Heart left ventricle (tissue), 16 donors: ENCODE measurements at regions of chr2 and their contacts with region 1.

Region 1: GRCh38 chr2:54704688-54705605 is 18.5 kb upstream of the EML6 start:
- DNase-seq: no peak
- ATAC-seq: peak in 2 of 4 donors; percentile 59 to 63
- H3K4me3 ChIP-seq: no peak overlapping the region
- H3K27ac ChIP-seq: peak overlapping the region in 2 of 12 donors; percentile 11 to 30
- H3K4me1 ChIP-seq: peaks cover 0 to 13% (median 0%) of the 10 kb centered on the region in 12 donors
- H3K27me3 ChIP-seq: peaks cover 0 to 15% (median 0%) of the 10 kb centered on the region in 9 donors
- CTCF ChIP-seq: peak; percentile 45 to 85 (median 64)
- POLR2A ChIP-seq: no peak

Region 2: GRCh38 chr2:54106631-54107454 is 598.1 kb before region 1 on chr2:
- intact Hi-C with region 1: loop called in 9 of 10 experiments (anchors 1 to 10 kb)
- DNase-seq: no peak
- ATAC-seq: peak in 3 of 4 donors; percentile 59 to 80 (median 75)
- H3K4me3 ChIP-seq: no peak overlapping the region
- H3K27ac ChIP-seq: no peak overlapping the region
- H3K4me1 ChIP-seq: peaks cover 0 to 8% (median 5%) of the 10 kb centered on the region in 12 donors
- H3K27me3 ChIP-seq: no peaks in the 10 kb centered on the region
- CTCF ChIP-seq: peak; percentile 43 to 78 (median 62)
- POLR2A ChIP-seq: no peak

Region 3: GRCh38 chr2:54176577-54176976 is 528.4 kb before region 1 on chr2:
- intact Hi-C with region 1: loop called (anchors 2 to 10 kb)
- DNase-seq: peak; percentile 48 to 65 (median 50)
- ATAC-seq: peak in 3 of 4 donors; percentile 80 to 87 (median 84)
- H3K4me3 ChIP-seq: no peak overlapping the region
- H3K27ac ChIP-seq: no peak overlapping the region
- H3K4me1 ChIP-seq: no peaks in the 10 kb centered on the region
- H3K27me3 ChIP-seq: no peaks in the 10 kb centered on the region
- CTCF ChIP-seq: peak; percentile 17 to 67 (median 50)
- POLR2A ChIP-seq: no peak

Region 4: GRCh38 chr2:54330162-54330925 is 374.6 kb before region 1 on chr2:
- intact Hi-C with region 1: loop called in 1 of 10 experiments (anchors 10 kb)
- DNase-seq: peak; percentile 97 to 99 (median 98)
- ATAC-seq: peak; percentile 97 to 99 (median 98)
- H3K4me3 ChIP-seq: peak overlapping the region; percentile 34 to 70 (median 59)
- H3K27ac ChIP-seq: peak overlapping the region; percentile 87 to 96 (median 92)
- H3K4me1 ChIP-seq: peaks cover 3 to 29% (median 13%) of the 10 kb centered on the region in 12 donors
- H3K27me3 ChIP-seq: no peaks in the 10 kb centered on the region
- CTCF ChIP-seq: no peak
- POLR2A ChIP-seq: peak; percentile 78 to 93

Region 5: GRCh38 chr2:54522624-54523281 is 182.2 kb before region 1 on chr2:
- intact Hi-C with region 1: loop called in 6 of 10 experiments (anchors 2 to 10 kb)
- DNase-seq: peak in 2 of 5 donors; percentile 45
- ATAC-seq: peak in 2 of 4 donors; percentile 37 to 47
- H3K4me3 ChIP-seq: no peak overlapping the region
- H3K27ac ChIP-seq: peak overlapping the region in 5 of 12 donors; percentile 6 to 82 (median 59)
- H3K4me1 ChIP-seq: peaks cover 8 to 94% (median 87%) of the 10 kb centered on the region in 12 donors
- H3K27me3 ChIP-seq: no peaks in the 10 kb centered on the region
- CTCF ChIP-seq: peak; percentile 42 to 68 (median 59)
- POLR2A ChIP-seq: no peak

Region 6: GRCh38 chr2:54657664-54658083 is 47.3 kb before region 1 on chr2:
- intact Hi-C with region 1: loop called in 4 of 10 experiments (anchors 2 to 5 kb)
- DNase-seq: peak in 2 of 5 donors; percentile 67 to 68
- ATAC-seq: peak; percentile 64 to 78 (median 68)
- H3K4me3 ChIP-seq: no peak overlapping the region
- H3K27ac ChIP-seq: peak overlapping the region in 10 of 12 donors; percentile 1 to 78 (median 56)
- H3K4me1 ChIP-seq: peaks cover 0 to 29% (median 23%) of the 10 kb centered on the region in 12 donors
- H3K27me3 ChIP-seq: no peaks in the 10 kb centered on the region
- CTCF ChIP-seq: peak; percentile 37 to 69 (median 56)
- POLR2A ChIP-seq: no peak

Region 7: DNA sequence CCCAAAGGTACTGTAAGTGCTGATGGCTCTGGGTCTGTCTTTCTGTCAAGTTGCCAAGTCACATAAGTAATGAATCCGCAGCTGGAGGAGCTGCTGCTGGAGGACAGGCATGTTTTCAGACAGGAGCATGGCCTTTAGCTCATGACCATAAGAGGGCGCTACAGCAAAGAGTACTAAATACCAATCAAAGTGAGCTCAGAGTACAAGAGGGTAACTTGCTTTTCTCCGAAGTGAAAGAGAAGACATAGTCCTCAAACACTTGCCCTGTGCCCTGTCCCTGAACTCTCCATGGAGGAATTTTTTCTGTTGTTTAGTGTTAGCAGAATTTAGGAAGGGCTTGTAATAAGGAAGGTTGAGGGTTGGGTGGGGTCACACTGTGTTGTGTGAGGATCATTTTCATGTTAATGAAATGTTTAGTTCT is 39.5 kb before region 1 on chr2:
- intact Hi-C with region 1: loop called in 2 of 10 experiments (anchors 5 kb)
- DNase-seq: no peak
- ATAC-seq: peak in 3 of 4 donors; percentile 23 to 34 (median 31)
- H3K4me3 ChIP-seq: no peak overlapping the region
- H3K27ac ChIP-seq: peak overlapping the region; percentile 77 to 96 (median 84)
- H3K4me1 ChIP-seq: peaks cover 20 to 63% (median 48%) of the 10 kb centered on the region in 12 donors
- H3K27me3 ChIP-seq: no peaks in the 10 kb centered on the region
- CTCF ChIP-seq: peak; percentile 35 to 70 (median 60)
- POLR2A ChIP-seq: no peak